ENCODE measurements at regions of chr18 and their contacts with region 1.

Region 1: GRCh38 chr18:74495581-74496507 is at the start of gene CNDP2:
- DNase-seq: peak; percentile 91 to 100 (median 98)
- ATAC-seq: peak; percentile 63
- H3K4me3 ChIP-seq: peak within 1 kb of the TSS; percentile 80
- H3K4me3 Mint-ChIP-seq: peak within 1 kb of the TSS; percentile 99
- H3K27ac ChIP-seq: peak within 1 kb of the TSS; percentile 78 to 86
- H3K27ac Mint-ChIP-seq: peak within 1 kb of the TSS; percentile 97
- H3K4me1 ChIP-seq: peaks cover 41% of the 10 kb centered on the region
- H3K4me1 Mint-ChIP-seq: peaks cover 61% of the 10 kb centered on the region
- H3K27me3 ChIP-seq: no peaks in the 10 kb centered on the region
- H3K27me3 Mint-ChIP-seq: no peaks in the 10 kb centered on the region
- CTCF ChIP-seq: no peak
- total RNA-seq, gene CNDP2: 75.5 to 75.7 TPM

Region 2: GRCh38 chr18:74196220-74197119 is 299.4 kb before region 1 on chr18:
- CTCF ChIA-PET with region 1: interaction called, 3 read pairs
- POLR2A ChIA-PET with region 1: no interaction called
- intact Hi-C with region 1: loop called (anchors 1 to 2 kb)
- DNase-seq: peak in 13 of 14 experiments; percentile 18 to 86 (median 36)
- ATAC-seq: peak; percentile 96
- H3K4me3 ChIP-seq: peak overlapping the region; percentile 50
- H3K4me3 Mint-ChIP-seq: peak overlapping the region; percentile 83
- H3K27ac ChIP-seq: peak overlapping the region in 1 of 2 donors; percentile 27
- H3K27ac Mint-ChIP-seq: peak overlapping the region; percentile 57
- H3K4me1 ChIP-seq: no peaks in the 10 kb centered on the region
- H3K4me1 Mint-ChIP-seq: no peaks in the 10 kb centered on the region
- H3K27me3 ChIP-seq: peaks cover 0 to 2% of the 10 kb centered on the region in 2 experiments
- H3K27me3 Mint-ChIP-seq: peaks cover 13% of the 10 kb centered on the region
- CTCF ChIP-seq: peak; percentile 99

Region 3: DNA sequence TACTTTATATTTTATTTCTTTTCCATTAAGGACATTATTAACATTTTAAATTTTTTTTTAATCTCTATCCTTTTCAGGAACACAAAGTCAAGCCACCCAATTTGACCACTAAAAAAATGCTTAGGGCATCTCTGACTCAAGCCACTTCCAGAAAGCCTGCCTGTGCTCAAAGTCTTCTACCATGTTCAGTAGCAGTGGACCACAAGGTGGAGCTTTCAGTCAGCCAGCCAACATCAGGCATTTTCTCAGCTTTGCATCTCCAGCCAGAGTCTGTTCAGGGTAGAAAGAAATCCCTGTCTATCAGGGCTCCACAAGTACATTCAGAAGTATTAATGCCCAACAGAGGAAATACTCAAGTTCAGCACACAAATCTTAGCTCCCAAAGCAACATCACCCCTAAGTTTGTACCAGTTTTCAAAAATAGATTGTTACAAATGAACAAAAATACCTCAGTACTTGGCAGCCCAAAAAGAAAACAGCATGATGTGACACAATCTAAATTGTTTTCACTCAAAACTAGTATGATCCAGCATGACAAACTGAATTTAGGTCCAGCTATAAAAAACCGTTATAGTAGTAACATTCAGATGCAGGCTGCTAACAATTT is 142.6 kb before region 1 on chr18:
- CTCF ChIA-PET with region 1: interaction called, 147 read pairs
- POLR2A ChIA-PET with region 1: interaction called, 69 read pairs
- intact Hi-C with region 1: loop called (anchors 1 kb)
- DNase-seq: peak; percentile 35 to 85 (median 52)
- ATAC-seq: peak; percentile 88
- H3K4me3 ChIP-seq: no peak overlapping the region
- H3K4me3 Mint-ChIP-seq: no peak overlapping the region
- H3K27ac ChIP-seq: no peak overlapping the region
- H3K27ac Mint-ChIP-seq: no peak overlapping the region
- H3K4me1 ChIP-seq: peaks cover 2% of the 10 kb centered on the region
- H3K4me1 Mint-ChIP-seq: peaks cover 5% of the 10 kb centered on the region
- H3K27me3 ChIP-seq: no peaks in the 10 kb centered on the region
- H3K27me3 Mint-ChIP-seq: no peaks in the 10 kb centered on the region
- CTCF ChIP-seq: peak; percentile 85

Region 4: DNA sequence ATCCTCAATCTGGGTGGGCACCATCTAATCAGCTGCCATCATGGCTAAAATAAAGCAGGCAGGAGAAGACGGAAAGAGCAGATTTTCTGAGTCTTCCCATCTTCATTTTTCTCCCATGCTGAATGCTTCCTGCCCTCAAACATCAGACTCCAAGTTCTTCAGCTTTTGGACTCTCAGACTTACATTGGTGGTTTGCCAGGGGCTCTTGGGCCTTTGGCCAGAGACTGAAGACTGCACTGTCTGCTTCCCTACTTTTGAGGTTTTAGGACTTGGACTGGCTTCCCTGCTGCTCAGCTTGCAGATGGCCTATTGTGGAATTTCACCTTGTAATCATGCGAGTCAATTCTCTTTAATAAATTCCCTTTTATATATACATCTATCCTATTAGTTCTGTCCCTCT is 75.4 kb before region 1 on chr18:
- CTCF ChIA-PET with region 1: no interaction called
- POLR2A ChIA-PET with region 1: no interaction called
- intact Hi-C with region 1: no loop called
- DNase-seq: no peak
- ATAC-seq: no peak
- H3K4me3 ChIP-seq: no peak overlapping the region
- H3K4me3 Mint-ChIP-seq: no peak overlapping the region
- H3K27ac ChIP-seq: no peak overlapping the region
- H3K27ac Mint-ChIP-seq: no peak overlapping the region
- H3K4me1 ChIP-seq: peaks cover 3% of the 10 kb centered on the region
- H3K4me1 Mint-ChIP-seq: no peaks in the 10 kb centered on the region
- H3K27me3 ChIP-seq: no peaks in the 10 kb centered on the region
- H3K27me3 Mint-ChIP-seq: no peaks in the 10 kb centered on the region
- CTCF ChIP-seq: no peak

Region 5: DNA sequence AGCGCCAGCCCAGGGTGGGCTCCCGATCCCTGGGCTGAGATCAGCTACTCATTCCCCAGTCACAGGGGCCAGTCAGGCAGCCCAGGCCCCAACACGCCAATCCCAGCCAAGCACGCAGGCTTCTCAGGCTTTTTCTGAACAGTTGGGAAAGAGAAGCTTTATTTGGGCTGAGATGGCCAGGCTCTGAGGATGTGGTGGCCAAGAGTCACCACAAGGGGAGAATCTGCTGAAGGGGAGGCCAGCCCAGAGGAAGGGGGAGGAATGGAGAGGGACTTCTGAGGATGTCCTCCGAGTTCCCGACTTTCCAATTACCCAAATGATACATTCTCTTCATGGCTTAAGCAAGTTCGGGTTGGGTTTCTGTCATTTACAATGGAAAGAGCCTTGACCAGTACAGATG is 36.0 kb before region 1 on chr18:
- CTCF ChIA-PET with region 1: no interaction called
- POLR2A ChIA-PET with region 1: no interaction called
- intact Hi-C with region 1: loop called in 1 of 2 experiments (anchors 1 kb)
- DNase-seq: no peak
- ATAC-seq: no peak
- H3K4me3 ChIP-seq: no peak overlapping the region
- H3K4me3 Mint-ChIP-seq: no peak overlapping the region
- H3K27ac ChIP-seq: no peak overlapping the region
- H3K27ac Mint-ChIP-seq: no peak overlapping the region
- H3K4me1 ChIP-seq: peaks cover 9% of the 10 kb centered on the region
- H3K4me1 Mint-ChIP-seq: peaks cover 21% of the 10 kb centered on the region
- H3K27me3 ChIP-seq: peaks cover 19 to 28% of the 10 kb centered on the region in 2 experiments
- H3K27me3 Mint-ChIP-seq: peaks cover 43% of the 10 kb centered on the region
- CTCF ChIP-seq: no peak

Region 6: GRCh38 chr18:74597662-74598349 is 102.0 kb after region 1 on chr18 and contains the start of gene ZNF407:
- CTCF ChIA-PET with region 1: no interaction called
- POLR2A ChIA-PET with region 1: interaction called, 18 read pairs
- intact Hi-C with region 1: loop called (anchors 1 to 2 kb)
- DNase-seq: peak; percentile 75 to 93 (median 83)
- ATAC-seq: peak; percentile 76
- H3K4me3 ChIP-seq: peak within 1 kb of the TSS; percentile 87
- H3K4me3 Mint-ChIP-seq: peak within 1 kb of the TSS; percentile 98
- H3K27ac ChIP-seq: peak within 1 kb of the TSS; percentile 96 to 98
- H3K27ac Mint-ChIP-seq: peak within 1 kb of the TSS; percentile 100
- H3K4me1 ChIP-seq: peaks cover 25% of the 10 kb centered on the region
- H3K4me1 Mint-ChIP-seq: peaks cover 71% of the 10 kb centered on the region
- H3K27me3 ChIP-seq: no peaks in the 10 kb centered on the region
- H3K27me3 Mint-ChIP-seq: no peaks in the 10 kb centered on the region
- CTCF ChIP-seq: no peak
- total RNA-seq, gene ZNF407: 23.2 to 24.7 TPM

Measured in CD4-positive, alpha-beta T cell (primary cell).